HEK293T (cell line): ENCODE measurements at regions of chr15 and their contacts with region 1.

Region 1: GRCh38 chr15:70153981-70154717 is 56.4 kb upstream of the TLE3 start:
- DNase-seq: no peak

Region 2: GRCh38 chr15:70109978-70110377 is 44.2 kb before region 1 on chr15:
- CTCF ChIA-PET with region 1: no interaction called
- POLR2A ChIA-PET with region 1: no interaction called
- DNase-seq: no peak

Region 3: GRCh38 chr15:70140543-70141375 is 13.4 kb before region 1 on chr15:
- CTCF ChIA-PET with region 1: interaction called, 4 read pairs
- POLR2A ChIA-PET with region 1: interaction called, 10 read pairs
- DNase-seq: no peak